ENCODE measurements at regions of chr16 and their contacts with region 1.

Region 1: DNA sequence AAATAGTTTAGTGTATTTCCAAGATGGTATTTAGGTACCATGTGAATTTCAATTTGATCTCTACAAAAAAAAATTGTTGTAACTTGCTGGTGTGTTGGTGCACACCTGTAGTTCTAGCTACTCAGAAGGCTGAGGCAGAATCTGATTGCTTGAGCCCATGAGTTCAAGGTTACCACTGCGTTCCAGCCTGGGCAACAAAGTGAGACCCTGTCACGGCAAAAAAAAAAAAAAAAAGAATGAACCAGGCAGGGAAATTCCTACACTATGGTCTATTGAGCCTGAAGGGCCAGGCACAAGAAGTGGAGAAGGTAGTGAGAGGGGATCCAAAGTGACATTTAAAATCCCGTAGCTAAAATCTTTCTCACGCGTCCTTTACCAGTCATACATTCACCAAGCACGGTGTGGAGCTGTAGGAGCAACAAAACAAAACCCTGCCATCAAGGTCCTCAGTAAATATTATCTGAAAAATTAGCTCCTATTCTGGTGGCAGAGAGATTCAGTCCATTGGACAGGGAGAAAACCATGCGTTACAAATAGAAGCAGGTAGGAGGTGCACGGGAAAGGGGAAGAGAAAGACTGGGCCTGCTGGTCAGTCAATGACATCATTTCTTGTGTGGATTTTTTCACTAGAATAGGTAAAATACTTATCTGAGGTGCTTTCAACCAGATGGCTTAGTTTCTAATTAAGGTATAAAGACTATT is 27.3 kb downstream of the TXNDC11 start:
- DNase-seq: no peak
- ATAC-seq: no peak
- H3K4me3 ChIP-seq: no peak overlapping the region
- H3K27ac ChIP-seq: no peak overlapping the region
- H3K4me1 ChIP-seq: no peaks in the 10 kb centered on the region
- H3K27me3 ChIP-seq: no peaks in the 10 kb centered on the region

Region 2: DNA sequence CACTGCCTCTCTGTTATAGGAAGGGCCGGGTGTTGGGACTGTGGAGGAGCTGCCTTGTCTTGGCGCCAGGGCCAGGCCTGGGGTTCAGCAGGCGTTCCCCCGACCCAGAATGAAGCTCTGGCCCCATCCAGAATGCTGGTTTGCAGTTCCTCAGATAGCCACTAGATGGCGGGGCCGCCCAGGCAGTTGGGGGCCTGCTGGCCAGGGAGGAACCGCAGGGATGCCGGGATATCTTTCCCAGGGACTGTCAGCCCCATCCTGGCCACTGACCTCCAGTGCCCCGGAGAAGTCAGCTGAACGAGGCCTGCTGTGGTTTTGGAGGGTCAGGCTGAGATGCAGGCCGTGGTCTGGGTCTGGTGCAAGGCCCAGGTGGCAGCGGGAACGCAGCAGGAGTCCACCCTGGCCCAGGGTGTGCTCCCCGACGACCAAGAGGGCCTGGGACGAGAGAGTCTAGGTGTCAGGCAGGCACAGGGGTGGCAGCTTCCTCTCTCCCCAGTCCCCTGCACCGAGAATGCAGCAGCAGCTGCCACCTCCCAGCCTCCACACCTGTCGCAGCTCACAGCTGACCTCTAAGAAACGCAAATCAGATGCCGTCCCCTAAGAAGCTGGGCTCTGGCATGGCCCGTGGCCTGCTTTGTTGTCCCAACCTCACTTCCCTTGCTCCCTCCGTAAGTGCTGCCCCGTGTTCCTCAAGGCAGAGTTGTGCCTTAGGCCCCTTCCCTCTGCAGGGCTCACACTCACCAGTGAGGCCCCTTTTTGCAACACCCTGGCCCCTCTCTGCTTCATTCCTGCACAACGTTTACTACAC is 319.0 kb before region 1 on chr16:
- intact Hi-C with region 1: loop called in 3 of 4 experiments (anchors 5 kb)
- DNase-seq: peak; percentile 71 to 89 (median 89)
- ATAC-seq: peak; percentile 77 to 81
- H3K4me3 ChIP-seq: no peak overlapping the region
- H3K27ac ChIP-seq: no peak overlapping the region
- H3K4me1 ChIP-seq: no peaks in the 10 kb centered on the region
- H3K27me3 ChIP-seq: no peaks in the 10 kb centered on the region

Region 3: GRCh38 chr16:11407047-11407982 is 308.1 kb before region 1 on chr16:
- intact Hi-C with region 1: loop called in 1 of 4 experiments (anchors 5 kb)
- DNase-seq: peak in 1 of 3 donors; percentile 69
- ATAC-seq: peak in 1 of 2 donors; percentile 49
- H3K4me3 ChIP-seq: no peak overlapping the region
- H3K27ac ChIP-seq: no peak overlapping the region
- H3K4me1 ChIP-seq: no peaks in the 10 kb centered on the region
- H3K27me3 ChIP-seq: no peaks in the 10 kb centered on the region

Region 4: DNA sequence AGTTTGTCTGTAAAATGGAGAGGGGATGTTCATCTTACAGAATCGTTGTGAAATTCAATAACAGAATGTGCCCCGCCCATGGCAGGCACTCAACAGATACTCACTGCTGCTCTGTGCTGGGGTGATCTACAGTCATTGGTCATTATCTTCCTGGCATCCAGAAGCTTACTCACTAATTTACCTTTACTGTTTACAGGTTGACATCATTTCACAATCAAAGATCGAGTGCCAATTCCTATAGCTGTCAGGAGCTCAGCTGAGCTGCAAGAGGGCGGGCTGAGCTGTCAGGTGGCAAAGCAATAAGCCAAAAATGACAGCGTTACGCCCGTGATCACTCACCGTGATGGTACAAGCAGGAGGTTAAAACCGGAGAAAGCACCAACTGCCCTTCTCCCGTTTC is 179.9 kb before region 1 on chr16:
- intact Hi-C with region 1: loop called in 2 of 4 experiments (anchors 5 to 10 kb)
- DNase-seq: no peak
- ATAC-seq: no peak
- H3K4me3 ChIP-seq: no peak overlapping the region
- H3K27ac ChIP-seq: no peak overlapping the region
- H3K4me1 ChIP-seq: no peaks in the 10 kb centered on the region
- H3K27me3 ChIP-seq: no peaks in the 10 kb centered on the region

Region 5: GRCh38 chr16:11586856-11587642 is 128.3 kb before region 1 on chr16 and contains the start of gene LITAF:
- intact Hi-C with region 1: no loop called
- DNase-seq: peak; percentile 74 to 89 (median 88)
- ATAC-seq: peak; percentile 90 to 92
- H3K4me3 ChIP-seq: peak within 1 kb of the TSS; percentile 99
- H3K27ac ChIP-seq: peak within 1 kb of the TSS; percentile 90
- H3K4me1 ChIP-seq: peaks cover 4% of the 10 kb centered on the region
- H3K27me3 ChIP-seq: no peaks in the 10 kb centered on the region
- total RNA-seq, gene LITAF: 54.0 to 76.5 (median 65.3) TPM

Region 6: GRCh38 chr16:11748404-11749254 is 33.2 kb after region 1 on chr16:
- intact Hi-C with region 1: no loop called
- DNase-seq: no peak
- ATAC-seq: no peak
- H3K4me3 ChIP-seq: no peak overlapping the region
- H3K27ac ChIP-seq: no peak overlapping the region
- H3K4me1 ChIP-seq: no peaks in the 10 kb centered on the region
- H3K27me3 ChIP-seq: no peaks in the 10 kb centered on the region

Region 7: DNA sequence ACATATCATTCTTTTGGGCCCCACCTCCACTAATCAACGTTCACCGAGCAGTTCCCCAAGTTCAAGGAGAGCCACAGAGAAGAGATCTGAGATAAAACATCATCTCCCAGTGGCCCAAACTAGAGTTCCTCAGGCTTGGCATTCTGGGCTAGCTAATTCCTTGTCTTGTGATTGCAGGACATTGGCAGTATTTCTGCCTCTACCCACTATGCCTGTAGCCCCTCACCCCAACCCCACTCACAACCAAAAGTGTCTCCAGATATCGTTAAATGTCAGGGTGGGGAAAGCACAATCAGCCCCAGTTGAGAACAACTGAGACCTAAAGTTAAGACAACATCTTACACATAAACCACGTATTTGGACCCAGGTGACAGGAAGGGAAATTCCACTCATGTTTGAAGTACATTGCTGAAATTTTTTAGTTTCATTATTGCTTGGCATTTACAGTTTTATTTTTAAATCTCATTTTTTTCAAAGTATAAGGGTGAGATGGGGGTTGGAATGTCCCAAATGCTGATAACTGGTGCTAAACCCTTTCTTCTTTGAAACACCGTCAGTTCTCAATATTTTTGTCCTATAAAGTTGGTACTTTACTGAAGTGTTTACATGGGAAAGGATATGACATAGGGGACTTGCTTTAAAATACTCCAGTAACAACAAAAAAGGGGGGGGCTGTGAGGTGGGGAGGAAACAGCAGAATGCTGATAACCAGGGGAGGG is 68.1 kb after region 1 on chr16:
- intact Hi-C with region 1: no loop called
- DNase-seq: no peak
- ATAC-seq: peak; percentile 51 to 57
- H3K4me3 ChIP-seq: no peak overlapping the region
- H3K27ac ChIP-seq: peak overlapping the region; percentile 95
- H3K4me1 ChIP-seq: peaks cover 14% of the 10 kb centered on the region
- H3K27me3 ChIP-seq: no peaks in the 10 kb centered on the region